Naive thymus-derived CD4-positive, alpha-beta T cell (primary cell): ENCODE measurements at regions of chr5 and their contacts with region 1.

Region 1: GRCh38 chr5:65925601-65926275 is 637 bp upstream of the ERBIN start:
- DNase-seq: peak; percentile 72 to 85 (median 81)
- ATAC-seq: peak; percentile 87
- H3K4me3 ChIP-seq: peak overlapping the region; percentile 81
- H3K4me3 Mint-ChIP-seq: peak overlapping the region; percentile 88 to 98 (median 93)
- H3K27ac ChIP-seq: peak overlapping the region; percentile 96
- H3K27ac Mint-ChIP-seq: peak overlapping the region; percentile 64 to 97 (median 95)
- H3K4me1 ChIP-seq: peaks cover 17 to 19% of the 10 kb centered on the region in 2 donors
- H3K4me1 Mint-ChIP-seq: peaks cover 29 to 43% (median 40%) of the 10 kb centered on the region in 7 donors
- H3K27me3 ChIP-seq: no peaks in the 10 kb centered on the region
- H3K27me3 Mint-ChIP-seq: peaks cover 0 to 29% (median 0%) of the 10 kb centered on the region in 5 donors

Region 2: GRCh38 chr5:65562731-65563701 is 362.7 kb before region 1 on chr5 and contains the starts of genes CENPK and PPWD1:
- CTCF ChIA-PET with region 1: no interaction called
- POLR2A ChIA-PET with region 1: interaction called, 6 read pairs
- intact Hi-C with region 1: loop called (anchors 1 to 5 kb)
- DNase-seq: peak; percentile 83 to 97 (median 94)
- ATAC-seq: peak; percentile 99
- H3K4me3 ChIP-seq: peak within 1 kb of the TSS; percentile 93
- H3K4me3 Mint-ChIP-seq: peak within 1 kb of the TSS; percentile 92 to 99 (median 96)
- H3K27ac ChIP-seq: peak within 1 kb of the TSS; percentile 93
- H3K27ac Mint-ChIP-seq: peak within 1 kb of the TSS; percentile 97 to 100 (median 98)
- H3K4me1 ChIP-seq: peaks cover 30% of the 10 kb centered on the region in 2 donors
- H3K4me1 Mint-ChIP-seq: peaks cover 22 to 79% (median 59%) of the 10 kb centered on the region in 7 donors
- H3K27me3 ChIP-seq: no peaks in the 10 kb centered on the region
- H3K27me3 Mint-ChIP-seq: no peaks in the 10 kb centered on the region
- total RNA-seq, gene CENPK: 7.2 to 78.8 (median 14.1) TPM
- total RNA-seq, gene PPWD1: 61.7 to 104 (median 81.2) TPM

Region 3: DNA sequence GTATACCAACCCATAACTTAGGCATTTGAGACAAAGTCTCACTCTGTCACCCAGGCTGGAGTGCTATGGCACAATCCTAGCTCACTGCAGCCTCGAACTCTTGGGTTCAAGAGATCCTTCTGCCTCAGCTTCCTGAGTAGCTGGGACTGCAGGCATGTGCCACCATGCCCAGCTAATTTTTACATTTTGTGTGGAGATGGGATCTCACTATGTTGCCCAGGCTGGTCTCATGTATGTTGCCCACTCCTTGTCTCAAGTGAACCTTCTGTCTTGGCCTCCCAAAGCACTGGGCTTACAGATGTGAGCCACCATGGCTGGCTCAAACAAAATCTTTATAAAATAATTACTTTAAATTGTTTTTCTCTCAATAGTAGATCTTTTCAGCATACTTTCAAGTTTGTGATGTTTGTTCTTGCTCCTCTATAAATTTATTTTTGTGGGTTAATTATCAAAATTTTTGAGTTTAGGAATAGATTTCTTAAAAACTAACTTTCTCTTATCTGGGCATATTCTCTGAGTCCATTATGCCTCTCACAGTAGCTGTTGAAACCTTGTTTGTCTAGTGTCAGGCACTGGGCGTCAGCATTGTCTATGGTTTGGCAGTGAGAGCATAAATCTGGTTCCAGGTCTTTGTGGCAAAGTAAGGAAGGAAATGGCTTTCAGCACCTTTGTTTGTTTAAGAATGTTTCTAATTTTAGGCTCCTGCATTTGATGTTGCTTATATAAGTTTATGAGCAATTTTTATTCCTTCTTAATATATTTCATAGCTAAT is 165.0 kb before region 1 on chr5:
- CTCF ChIA-PET with region 1: interaction called, 7 read pairs
- POLR2A ChIA-PET with region 1: interaction called, 21 read pairs
- intact Hi-C with region 1: loop called (anchors 1 to 5 kb)
- DNase-seq: peak in 7 of 9 donors; percentile 53 to 81 (median 67)
- ATAC-seq: peak; percentile 95
- H3K4me3 ChIP-seq: no peak overlapping the region
- H3K4me3 Mint-ChIP-seq: peak overlapping the region in 3 of 10 donors; percentile 2 to 24 (median 4)
- H3K27ac ChIP-seq: no peak overlapping the region
- H3K27ac Mint-ChIP-seq: peak overlapping the region in 3 of 9 donors; percentile 0 to 68 (median 23)
- H3K4me1 ChIP-seq: peaks cover 0 to 4% of the 10 kb centered on the region in 2 donors
- H3K4me1 Mint-ChIP-seq: peaks cover 3 to 10% (median 6%) of the 10 kb centered on the region in 7 donors
- H3K27me3 ChIP-seq: no peaks in the 10 kb centered on the region
- H3K27me3 Mint-ChIP-seq: no peaks in the 10 kb centered on the region

Region 4: GRCh38 chr5:65867542-65868200 is 58.1 kb before region 1 on chr5:
- CTCF ChIA-PET with region 1: no interaction called
- POLR2A ChIA-PET with region 1: interaction called, 40 read pairs
- intact Hi-C with region 1: loop called in 1 of 2 experiments (anchors 1 kb)
- DNase-seq: peak in 6 of 9 donors; percentile 5 to 27 (median 12)
- ATAC-seq: no peak
- H3K4me3 ChIP-seq: peak overlapping the region; percentile 27
- H3K4me3 Mint-ChIP-seq: peak overlapping the region; percentile 61 to 84 (median 78)
- H3K27ac ChIP-seq: peak overlapping the region; percentile 69
- H3K27ac Mint-ChIP-seq: peak overlapping the region in 8 of 9 donors; percentile 82 to 99 (median 93)
- H3K4me1 ChIP-seq: peaks cover 0 to 16% of the 10 kb centered on the region in 2 donors
- H3K4me1 Mint-ChIP-seq: peaks cover 16 to 49% (median 30%) of the 10 kb centered on the region in 7 donors
- H3K27me3 ChIP-seq: no peaks in the 10 kb centered on the region
- H3K27me3 Mint-ChIP-seq: no peaks in the 10 kb centered on the region

Region 5: GRCh38 chr5:65961633-65962032 is 35.9 kb after region 1 on chr5:
- CTCF ChIA-PET with region 1: no interaction called
- POLR2A ChIA-PET with region 1: interaction called, 4 read pairs
- intact Hi-C with region 1: loop called in 1 of 2 experiments (anchors 2 kb)
- DNase-seq: no peak
- ATAC-seq: peak; percentile 48
- H3K4me3 ChIP-seq: no peak overlapping the region
- H3K4me3 Mint-ChIP-seq: peak overlapping the region in 7 of 10 donors; percentile 2 to 55 (median 13)
- H3K27ac ChIP-seq: no peak overlapping the region
- H3K27ac Mint-ChIP-seq: peak overlapping the region in 7 of 9 donors; percentile 1 to 44 (median 11)
- H3K4me1 ChIP-seq: peaks cover 4 to 32% of the 10 kb centered on the region in 2 donors
- H3K4me1 Mint-ChIP-seq: peaks cover 22 to 81% (median 47%) of the 10 kb centered on the region in 7 donors
- H3K27me3 ChIP-seq: no peaks in the 10 kb centered on the region
- H3K27me3 Mint-ChIP-seq: no peaks in the 10 kb centered on the region

Region 6: GRCh38 chr5:66144074-66144833 is 218.5 kb after region 1 on chr5 and contains the start of gene SREK1:
- CTCF ChIA-PET with region 1: interaction called, 3 read pairs
- POLR2A ChIA-PET with region 1: interaction called, 7 read pairs
- intact Hi-C with region 1: loop called (anchors 1 kb)
- DNase-seq: peak; percentile 84 to 90 (median 89)
- ATAC-seq: peak; percentile 91
- H3K4me3 ChIP-seq: peak within 1 kb of the TSS; percentile 80
- H3K4me3 Mint-ChIP-seq: peak within 1 kb of the TSS; percentile 91 to 100 (median 98)
- H3K27ac ChIP-seq: peak within 1 kb of the TSS; percentile 98
- H3K27ac Mint-ChIP-seq: peak within 1 kb of the TSS; percentile 99 to 100 (median 100)
- H3K4me1 ChIP-seq: peaks cover 21 to 34% of the 10 kb centered on the region in 2 donors
- H3K4me1 Mint-ChIP-seq: peaks cover 22 to 60% (median 47%) of the 10 kb centered on the region in 7 donors
- H3K27me3 ChIP-seq: no peaks in the 10 kb centered on the region
- H3K27me3 Mint-ChIP-seq: no peaks in the 10 kb centered on the region
- total RNA-seq, gene SREK1: 68.2 to 143 (median 85.8) TPM

Region 7: DNA sequence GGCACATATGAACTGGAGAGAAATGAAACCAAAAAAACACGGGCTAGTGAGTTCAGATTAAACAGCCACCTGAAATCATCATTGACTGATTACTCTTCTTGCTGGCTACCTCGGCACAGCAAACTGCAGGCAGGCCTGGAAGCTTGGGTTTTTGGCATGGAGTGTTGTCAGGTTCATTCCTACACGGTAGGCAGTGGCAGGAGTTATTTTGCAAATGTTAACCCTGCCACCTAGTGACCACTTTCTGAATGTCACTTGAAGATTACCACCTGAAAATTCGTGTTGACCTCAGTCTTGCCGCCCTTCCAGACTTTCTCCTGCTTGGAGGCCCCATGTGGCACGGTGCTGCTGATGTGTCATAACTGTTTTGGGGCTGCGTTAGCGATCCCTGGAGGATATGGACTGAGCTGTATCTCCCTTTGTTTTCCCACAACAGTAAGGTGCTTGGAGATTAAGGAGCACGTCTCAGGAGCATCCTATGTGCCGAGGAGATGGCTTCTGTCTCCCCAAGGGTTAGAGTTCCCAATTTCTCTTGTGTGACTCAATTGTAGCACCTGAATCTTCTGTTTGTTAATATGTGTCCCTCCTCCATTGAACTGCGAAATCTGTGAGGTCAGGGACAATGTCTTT is 1283.5 kb after region 1 on chr5:
- CTCF ChIA-PET with region 1: no interaction called
- POLR2A ChIA-PET with region 1: no interaction called
- intact Hi-C with region 1: loop called in 1 of 2 experiments (anchors 2 kb)
- DNase-seq: peak; percentile 33 to 77 (median 69)
- ATAC-seq: peak; percentile 74
- H3K4me3 ChIP-seq: peak overlapping the region; percentile 14
- H3K4me3 Mint-ChIP-seq: peak overlapping the region in 5 of 10 donors; percentile 47 to 55 (median 50)
- H3K27ac ChIP-seq: peak overlapping the region; percentile 0
- H3K27ac Mint-ChIP-seq: peak overlapping the region; percentile 78 to 98 (median 85)
- H3K4me1 ChIP-seq: peaks cover 50 to 54% of the 10 kb centered on the region in 2 donors
- H3K4me1 Mint-ChIP-seq: peaks cover 39 to 71% (median 66%) of the 10 kb centered on the region in 7 donors
- H3K27me3 ChIP-seq: no peaks in the 10 kb centered on the region
- H3K27me3 Mint-ChIP-seq: peaks cover 0 to 2% (median 0%) of the 10 kb centered on the region in 5 donors